Right cardiac atrium (tissue), 5 donors: ENCODE measurements at regions of chr1 and their contacts with region 1.

Region 1: GRCh38 chr1:168529518-168529917 is 14.3 kb downstream of the XCL2 start:
- DNase-seq: no peak
- ATAC-seq: no peak
- H3K4me3 ChIP-seq: no peak overlapping the region
- H3K27ac ChIP-seq: no peak overlapping the region
- H3K4me1 ChIP-seq: no peaks in the 10 kb centered on the region
- H3K27me3 ChIP-seq: no peaks in the 10 kb centered on the region

Region 2: GRCh38 chr1:168100315-168101002 is 429.1 kb before region 1 on chr1:
- intact Hi-C with region 1: no loop called
- DNase-seq: no peak
- ATAC-seq: no peak
- H3K4me3 ChIP-seq: no peak overlapping the region
- H3K27ac ChIP-seq: no peak overlapping the region
- H3K4me1 ChIP-seq: no peaks in the 10 kb centered on the region
- H3K27me3 ChIP-seq: no peaks in the 10 kb centered on the region

Region 3: GRCh38 chr1:168452329-168452728 is 77.2 kb before region 1 on chr1:
- intact Hi-C with region 1: loop called in 1 of 4 experiments (anchors 5 kb)
- DNase-seq: no peak
- ATAC-seq: no peak
- H3K4me3 ChIP-seq: no peak overlapping the region
- H3K27ac ChIP-seq: no peak overlapping the region
- H3K4me1 ChIP-seq: no peaks in the 10 kb centered on the region
- H3K27me3 ChIP-seq: no peaks in the 10 kb centered on the region